Activated T-helper 2 cell treated with anti-CD3 and anti-CD28 coated beads, Interferon-gamma antibody, Interleukin-2, Interleukin-4, amounts not matched to agents 10 μg/mL and 5 μg/mL and 100 μg/mL, durations not matched to agents 14 hours and 24 hours and 36 hours (primary cell): ENCODE measurements at regions of chr10 and their contacts with region 1.

Region 1: GRCh38 chr10:114779803-114780609 is 41.6 kb upstream of the FHIP2A start:
- DNase-seq: no peak
- H3K4me3 Mint-ChIP-seq: no peak overlapping the region
- H3K27ac Mint-ChIP-seq: no peak overlapping the region
- H3K4me1 Mint-ChIP-seq: peaks cover 12% of the 10 kb centered on the region
- H3K27me3 Mint-ChIP-seq: peaks cover 28% of the 10 kb centered on the region

Region 2: GRCh38 chr10:114703377-114704107 is 76.5 kb before region 1 on chr10:
- intact Hi-C with region 1: loop called (anchors 5 kb)
- DNase-seq: no peak
- H3K4me3 Mint-ChIP-seq: no peak overlapping the region
- H3K27ac Mint-ChIP-seq: no peak overlapping the region
- H3K4me1 Mint-ChIP-seq: no peaks in the 10 kb centered on the region
- H3K27me3 Mint-ChIP-seq: peaks cover 35% of the 10 kb centered on the region